AG04450 (cell line): ENCODE measurements at regions of chr20 and their contacts with region 1.

Region 1: GRCh38 chr20:60210779-60211617 is 252.8 kb downstream of the CDH26 start:
- DNase-seq: peak; percentile 27
- H3K4me3 ChIP-seq: no peak overlapping the region
- H3K27ac ChIP-seq: no peak overlapping the region
- H3K27me3 ChIP-seq: peaks cover 8% of the 10 kb centered on the region
- CTCF ChIP-seq: peak; percentile 96

Region 2: DNA sequence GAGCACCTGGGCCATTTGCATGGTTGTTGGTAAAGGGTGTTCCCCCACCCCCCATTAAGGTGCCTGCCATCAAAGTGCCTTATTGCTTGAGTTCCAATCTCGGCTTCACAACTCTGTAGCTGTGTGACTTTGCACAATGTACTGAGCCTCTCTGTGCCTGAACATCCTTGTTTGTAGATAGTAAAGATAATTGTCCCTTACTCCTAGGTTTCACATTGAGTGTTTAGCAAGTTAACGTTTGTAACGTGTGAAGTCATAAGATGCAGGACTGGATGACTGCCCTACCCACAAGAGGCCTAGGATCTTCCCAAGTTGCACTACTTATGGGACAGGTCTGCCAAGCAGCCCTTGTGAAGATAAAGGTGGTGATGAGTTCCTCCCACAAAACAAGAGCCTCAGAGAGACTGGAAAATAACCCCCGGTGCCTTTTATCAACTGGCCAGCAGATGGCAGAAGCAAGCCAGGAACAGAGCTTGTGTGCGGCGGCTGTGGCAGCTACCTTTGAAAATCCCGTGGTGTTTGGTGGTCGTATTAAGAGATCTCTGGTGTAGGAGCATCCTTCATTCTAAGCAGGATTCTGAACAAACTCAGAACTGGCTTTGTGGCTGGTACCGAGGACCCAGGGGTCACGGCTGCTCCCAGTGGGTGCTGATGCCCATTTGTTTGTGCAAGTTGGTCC is 153.7 kb before region 1 on chr20:
- CTCF ChIA-PET with region 1: interaction called, 24 read pairs
- POLR2A ChIA-PET with region 1: no interaction called
- DNase-seq: no peak
- H3K4me3 ChIP-seq: no peak overlapping the region
- H3K27ac ChIP-seq: no peak overlapping the region
- H3K27me3 ChIP-seq: peaks cover 12% of the 10 kb centered on the region
- CTCF ChIP-seq: peak; percentile 94

Region 3: GRCh38 chr20:60222497-60222896 is 11.5 kb after region 1 on chr20:
- CTCF ChIA-PET with region 1: interaction called, 16 read pairs
- POLR2A ChIA-PET with region 1: no interaction called
- DNase-seq: no peak
- H3K4me3 ChIP-seq: no peak overlapping the region
- H3K27ac ChIP-seq: no peak overlapping the region
- H3K27me3 ChIP-seq: peaks cover 4% of the 10 kb centered on the region
- CTCF ChIP-seq: no peak

Region 4: GRCh38 chr20:60228255-60228654 is 17.3 kb after region 1 on chr20:
- CTCF ChIA-PET with region 1: interaction called, 16 read pairs
- POLR2A ChIA-PET with region 1: no interaction called
- DNase-seq: no peak
- H3K4me3 ChIP-seq: no peak overlapping the region
- H3K27ac ChIP-seq: no peak overlapping the region
- H3K27me3 ChIP-seq: no peaks in the 10 kb centered on the region
- CTCF ChIP-seq: no peak

Region 5: GRCh38 chr20:60236613-60237012 is 25.6 kb after region 1 on chr20:
- CTCF ChIA-PET with region 1: interaction called, 14 read pairs
- POLR2A ChIA-PET with region 1: no interaction called
- DNase-seq: peak; percentile 47
- H3K4me3 ChIP-seq: no peak overlapping the region
- H3K27ac ChIP-seq: no peak overlapping the region
- H3K27me3 ChIP-seq: no peaks in the 10 kb centered on the region
- CTCF ChIP-seq: no peak

Region 6: DNA sequence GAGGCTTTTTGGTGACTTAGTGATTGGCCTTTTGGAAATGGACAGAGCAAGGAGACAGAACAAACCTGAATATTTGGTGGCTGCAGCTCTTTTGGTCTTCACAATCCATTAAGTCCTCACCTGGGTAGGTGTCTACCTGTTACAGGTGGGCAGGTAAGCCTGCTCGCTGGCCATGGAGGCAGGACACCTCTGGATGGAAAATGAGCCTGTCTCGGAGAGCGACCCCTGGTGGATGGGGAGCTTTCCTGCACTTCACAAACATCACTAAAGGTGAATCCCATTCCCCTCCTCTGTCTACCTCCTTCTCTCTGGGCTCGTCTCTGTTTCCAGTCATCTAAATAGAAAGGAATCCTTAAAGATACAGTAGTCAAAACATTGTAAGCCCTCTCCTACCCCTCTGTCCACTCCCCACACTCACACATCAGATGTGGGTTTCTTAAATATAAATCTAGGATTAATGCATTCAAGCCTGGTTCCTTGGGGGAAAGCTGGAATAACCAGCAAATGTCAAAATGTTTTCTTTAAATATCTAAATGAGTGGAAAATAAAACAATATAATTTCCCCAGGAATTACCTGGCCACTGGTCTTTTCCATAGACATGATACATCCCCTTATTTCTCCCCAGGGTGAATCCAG is 52.1 kb after region 1 on chr20:
- CTCF ChIA-PET with region 1: interaction called, 64 read pairs
- POLR2A ChIA-PET with region 1: no interaction called
- DNase-seq: no peak
- H3K4me3 ChIP-seq: no peak overlapping the region
- H3K27ac ChIP-seq: no peak overlapping the region
- H3K27me3 ChIP-seq: peaks cover 15% of the 10 kb centered on the region
- CTCF ChIP-seq: peak; percentile 65

Region 7: DNA sequence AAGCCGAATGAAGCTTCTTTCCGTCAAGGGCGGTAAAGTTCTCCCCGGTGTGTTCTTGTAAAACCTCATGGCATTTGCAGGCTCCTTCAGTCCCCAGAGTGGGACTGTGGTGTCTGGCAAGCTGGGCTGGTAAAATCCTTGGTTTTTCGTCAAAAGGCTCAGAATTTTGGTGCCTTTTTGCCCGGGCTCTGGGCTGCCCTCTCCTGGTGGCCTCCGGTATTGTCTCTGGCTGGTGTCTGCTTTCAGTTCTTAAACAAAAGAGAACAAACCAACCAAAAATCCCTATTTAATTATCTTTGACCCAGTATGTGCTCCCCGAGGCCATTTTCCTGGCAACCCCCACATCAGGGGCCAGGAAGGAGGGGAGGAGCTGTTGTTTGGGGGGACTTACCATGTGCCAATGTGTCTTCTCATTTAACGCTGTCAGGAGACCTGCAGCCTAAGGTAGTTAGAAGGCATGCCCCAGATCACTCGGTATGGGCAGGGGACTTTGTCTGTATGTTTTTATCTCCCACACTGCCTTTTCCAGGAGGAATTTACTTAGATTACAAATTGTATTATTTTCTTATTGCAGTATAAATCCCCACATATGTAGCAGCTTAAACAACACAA is 1052.2 kb after region 1 on chr20:
- CTCF ChIA-PET with region 1: interaction called, 15 read pairs
- POLR2A ChIA-PET with region 1: no interaction called
- DNase-seq: no peak
- H3K4me3 ChIP-seq: no peak overlapping the region
- H3K27ac ChIP-seq: no peak overlapping the region
- H3K27me3 ChIP-seq: no peaks in the 10 kb centered on the region
- CTCF ChIP-seq: peak; percentile 95